ENCODE measurements at regions of chr16 and their contacts with region 1.

Region 1: GRCh38 chr16:23384878-23385277 is 68.1 kb downstream of the COG7 start:
- DNase-seq: no peak
- ATAC-seq: no peak
- H3K4me3 Mint-ChIP-seq: no peak overlapping the region
- H3K27ac Mint-ChIP-seq: no peak overlapping the region
- H3K4me1 Mint-ChIP-seq: no peaks in the 10 kb centered on the region
- H3K27me3 Mint-ChIP-seq: no peaks in the 10 kb centered on the region
- CTCF ChIP-seq: no peak

Region 2: GRCh38 chr16:23359092-23359760 is 25.7 kb before region 1 on chr16:
- CTCF ChIA-PET with region 1: no interaction called
- POLR2A ChIA-PET with region 1: no interaction called
- DNase-seq: no peak
- ATAC-seq: no peak
- H3K4me3 Mint-ChIP-seq: no peak overlapping the region
- H3K27ac Mint-ChIP-seq: peak overlapping the region; percentile 22
- H3K4me1 Mint-ChIP-seq: no peaks in the 10 kb centered on the region
- H3K27me3 Mint-ChIP-seq: no peaks in the 10 kb centered on the region
- CTCF ChIP-seq: no peak

Region 3: DNA sequence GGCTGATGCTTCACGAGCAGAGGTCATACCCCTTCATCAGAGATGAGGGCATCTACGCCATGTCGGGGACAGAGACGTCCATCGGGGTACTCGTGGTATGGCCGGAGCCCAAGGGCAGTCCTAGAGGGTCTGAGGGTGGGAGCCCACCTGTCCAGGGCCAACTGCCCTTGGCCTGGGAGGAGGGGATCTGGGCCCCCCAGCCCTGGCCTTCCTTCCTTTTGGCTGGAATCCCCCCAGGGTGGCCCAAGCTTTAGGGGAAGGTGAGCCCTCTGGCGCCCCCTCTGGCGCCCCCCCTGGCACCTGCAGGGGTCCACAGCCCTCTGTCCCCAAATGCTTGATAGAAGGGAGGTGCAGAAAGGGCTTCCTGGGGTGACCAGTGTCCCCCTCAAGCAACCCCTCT is 13.5 kb before region 1 on chr16:
- CTCF ChIA-PET with region 1: interaction called, 18 read pairs
- POLR2A ChIA-PET with region 1: no interaction called
- DNase-seq: peak; percentile 32
- ATAC-seq: peak; percentile 38; the same call in 1 of the 2 replicates
- H3K4me3 Mint-ChIP-seq: no peak overlapping the region
- H3K27ac Mint-ChIP-seq: no peak overlapping the region
- H3K4me1 Mint-ChIP-seq: no peaks in the 10 kb centered on the region
- H3K27me3 Mint-ChIP-seq: no peaks in the 10 kb centered on the region
- CTCF ChIP-seq: peak; percentile 47; the same call in 1 of the 2 replicates

Region 4: GRCh38 chr16:23408823-23409298 is 24.0 kb after region 1 on chr16:
- CTCF ChIA-PET with region 1: no interaction called
- POLR2A ChIA-PET with region 1: interaction called, 10 read pairs
- DNase-seq: no peak
- ATAC-seq: peak; percentile 67
- H3K4me3 Mint-ChIP-seq: no peak overlapping the region
- H3K27ac Mint-ChIP-seq: peak overlapping the region; percentile 80
- H3K4me1 Mint-ChIP-seq: peaks cover 19% of the 10 kb centered on the region
- H3K27me3 Mint-ChIP-seq: no peaks in the 10 kb centered on the region
- CTCF ChIP-seq: no peak

Region 5: DNA sequence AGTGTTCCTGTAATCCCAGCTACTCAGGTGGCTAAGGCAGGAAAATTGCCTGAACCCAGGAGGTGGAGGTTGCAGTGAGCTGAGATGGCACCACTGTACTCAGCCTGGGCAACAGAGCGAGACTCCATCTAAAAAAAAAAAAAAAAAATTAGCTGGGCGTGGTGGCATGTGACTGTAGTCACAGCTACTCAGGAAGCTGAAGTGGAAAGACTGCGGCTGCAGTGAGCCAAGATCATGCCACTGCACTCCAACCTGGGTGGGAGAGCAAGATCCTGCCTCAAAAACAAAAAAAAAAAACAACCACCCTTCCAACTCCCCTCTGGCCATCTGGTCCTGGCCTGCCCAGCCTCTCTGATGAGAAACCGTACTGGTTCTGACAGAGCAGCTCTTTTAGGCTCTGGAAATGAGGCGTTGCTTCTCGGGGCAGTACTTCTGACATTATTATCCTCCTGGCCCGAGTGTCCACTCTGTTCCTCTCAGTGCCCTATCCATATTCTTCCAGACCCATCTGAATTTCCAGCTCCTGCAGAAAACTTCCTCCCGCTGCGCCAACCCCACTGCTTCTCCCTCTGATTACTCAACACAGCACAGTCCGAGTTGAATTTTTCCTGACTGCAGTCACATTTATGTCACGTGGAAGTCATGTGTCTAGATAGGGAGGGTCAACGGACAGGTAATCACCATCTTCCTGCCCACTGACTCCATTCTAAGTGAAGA is 112.1 kb after region 1 on chr16:
- CTCF ChIA-PET with region 1: no interaction called
- POLR2A ChIA-PET with region 1: no interaction called
- DNase-seq: no peak
- ATAC-seq: no peak
- H3K4me3 Mint-ChIP-seq: no peak overlapping the region
- H3K27ac Mint-ChIP-seq: peak overlapping the region; percentile 77
- H3K4me1 Mint-ChIP-seq: peaks cover 26% of the 10 kb centered on the region
- H3K27me3 Mint-ChIP-seq: no peaks in the 10 kb centered on the region
- CTCF ChIP-seq: no peak